ENCODE measurements at regions of chr12 and their contacts with region 1.

Region 1: DNA sequence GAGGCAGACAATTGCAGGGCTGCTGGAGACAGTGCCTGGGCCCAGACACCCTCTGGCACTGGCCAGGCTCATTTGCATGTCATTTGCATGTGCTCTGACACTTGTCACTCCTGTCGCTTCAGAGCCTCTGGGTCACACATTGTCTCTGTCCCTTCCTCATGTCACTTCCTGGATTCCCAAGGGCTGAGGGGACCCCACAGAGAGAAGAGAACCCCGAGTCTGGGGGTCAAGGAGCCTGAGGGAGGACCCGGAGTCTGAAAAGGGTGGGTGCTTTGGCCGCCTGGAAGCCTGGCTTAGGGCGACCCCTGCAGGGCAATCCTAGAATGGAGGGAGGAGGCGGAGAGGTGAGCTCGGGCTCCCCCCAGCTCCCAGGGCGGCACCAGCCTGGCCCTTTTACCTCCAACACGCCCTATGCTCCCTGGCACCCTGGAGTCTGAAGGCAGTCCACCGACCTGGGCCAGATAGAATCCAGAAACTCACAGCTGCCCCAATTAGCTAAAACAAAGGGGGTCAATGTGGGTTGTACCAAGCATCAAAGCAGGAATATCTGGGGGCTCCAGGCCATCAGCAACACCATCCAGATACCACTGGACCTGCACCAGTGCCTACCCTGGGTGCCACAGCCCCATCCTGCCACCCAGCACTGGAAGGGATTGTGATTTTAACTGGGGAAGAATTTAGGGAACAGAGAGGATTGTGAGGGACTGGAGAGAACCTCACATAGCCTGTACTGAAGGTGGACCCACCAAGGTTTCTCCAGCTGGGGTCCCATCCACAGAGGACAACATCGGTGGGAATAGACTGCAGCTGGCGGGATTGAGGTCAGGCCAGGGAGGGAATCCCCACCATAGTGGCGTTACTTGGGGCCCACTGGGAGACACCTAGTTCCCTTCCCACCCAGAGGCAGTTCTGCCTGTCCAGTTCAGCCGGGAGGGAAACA is 21.8 kb upstream of the KRT78 start:
- DNase-seq: peak; percentile 88
- H3K4me3 Mint-ChIP-seq: no peak overlapping the region
- H3K27ac Mint-ChIP-seq: no peak overlapping the region
- H3K4me1 Mint-ChIP-seq: peaks cover 25% of the 10 kb centered on the region
- H3K27me3 Mint-ChIP-seq: no peaks in the 10 kb centered on the region

Region 2: GRCh38 chr12:52203075-52203921 is 667.3 kb before region 1 on chr12:
- CTCF ChIA-PET with region 1: no interaction called
- intact Hi-C with region 1: no loop called
- DNase-seq: peak; percentile 37
- H3K4me3 Mint-ChIP-seq: no peak overlapping the region
- H3K27ac Mint-ChIP-seq: no peak overlapping the region
- H3K4me1 Mint-ChIP-seq: peaks cover 6% of the 10 kb centered on the region
- H3K27me3 Mint-ChIP-seq: peaks cover 7% of the 10 kb centered on the region

Region 3: DNA sequence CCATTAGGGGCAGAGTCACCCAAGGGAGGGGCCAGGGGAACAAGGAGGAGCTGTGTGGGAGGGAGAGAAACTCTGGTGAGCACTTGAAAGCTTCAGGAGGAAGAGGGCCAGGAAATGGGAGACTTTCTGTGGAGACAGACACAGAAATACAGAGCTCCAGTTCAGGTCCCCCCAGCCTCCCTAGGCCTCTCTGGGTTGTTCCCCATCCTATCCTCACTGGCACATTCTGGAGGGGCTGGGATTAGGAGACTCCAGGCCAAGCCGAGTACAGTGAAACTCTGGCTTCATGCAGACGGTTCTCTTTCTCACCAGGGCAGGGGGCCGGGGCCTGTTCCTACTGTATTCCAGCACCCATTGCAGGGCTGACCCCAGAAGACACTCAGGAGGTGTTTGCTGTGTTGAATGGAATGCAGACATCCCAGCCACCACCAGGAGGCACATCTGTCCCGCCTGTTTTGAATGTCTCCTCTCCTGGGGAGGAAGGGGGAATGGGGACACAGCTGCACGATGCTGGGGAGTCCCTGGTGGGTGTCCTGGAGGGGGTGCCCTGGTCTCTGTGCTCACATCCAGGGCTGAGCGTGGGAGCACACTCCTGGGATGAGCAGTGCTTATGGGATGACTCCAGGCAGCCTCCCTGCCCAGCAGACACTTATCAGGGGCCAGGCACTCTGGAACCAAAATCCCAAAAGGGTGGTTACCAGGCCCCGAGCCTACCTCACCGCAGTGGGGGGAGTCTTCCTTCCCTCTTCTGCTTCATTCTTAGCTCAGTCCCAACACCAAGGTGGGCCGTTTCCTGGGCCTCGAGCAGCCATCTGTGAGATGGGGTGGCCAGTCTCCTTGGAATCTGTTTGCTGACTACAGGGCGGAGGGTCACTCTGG is 479.6 kb before region 1 on chr12:
- CTCF ChIA-PET with region 1: interaction called, 3 read pairs
- intact Hi-C with region 1: loop called (anchors 5 kb)
- DNase-seq: peak; percentile 21
- H3K4me3 Mint-ChIP-seq: no peak overlapping the region
- H3K27ac Mint-ChIP-seq: no peak overlapping the region
- H3K4me1 Mint-ChIP-seq: no peaks in the 10 kb centered on the region
- H3K27me3 Mint-ChIP-seq: no peaks in the 10 kb centered on the region

Region 4: DNA sequence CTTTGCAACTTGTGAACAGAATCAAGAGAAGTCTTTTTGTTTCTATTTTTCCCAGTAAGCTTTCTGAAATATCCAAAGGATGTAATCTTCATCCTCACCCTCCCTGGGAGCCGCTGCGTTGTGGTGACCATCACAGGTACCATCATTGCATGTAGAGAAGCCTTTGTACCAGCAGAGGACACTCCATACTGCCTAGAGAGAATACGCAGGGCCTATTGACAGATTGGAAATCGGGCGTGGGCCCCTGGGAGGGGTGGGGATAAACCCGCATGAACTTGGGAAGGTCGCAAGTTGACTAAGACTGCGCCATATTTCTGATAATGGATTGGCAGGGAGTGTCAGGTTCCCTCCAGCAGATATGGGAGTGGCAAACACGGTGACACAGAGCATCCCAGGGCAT is 203.1 kb before region 1 on chr12:
- CTCF ChIA-PET with region 1: interaction called, 4 read pairs
- intact Hi-C with region 1: loop called (anchors 5 kb)
- DNase-seq: no peak
- H3K4me3 Mint-ChIP-seq: no peak overlapping the region
- H3K27ac Mint-ChIP-seq: no peak overlapping the region
- H3K4me1 Mint-ChIP-seq: no peaks in the 10 kb centered on the region
- H3K27me3 Mint-ChIP-seq: no peaks in the 10 kb centered on the region

Region 5: GRCh38 chr12:53321074-53321814 is 450.6 kb after region 1 on chr12 and contains the start of gene AAAS:
- CTCF ChIA-PET with region 1: no interaction called
- intact Hi-C with region 1: no loop called
- DNase-seq: peak; percentile 98
- H3K4me3 Mint-ChIP-seq: peak within 1 kb of the TSS; percentile 91
- H3K27ac Mint-ChIP-seq: peak within 1 kb of the TSS; percentile 97
- H3K4me1 Mint-ChIP-seq: peaks cover 38% of the 10 kb centered on the region
- H3K27me3 Mint-ChIP-seq: no peaks in the 10 kb centered on the region
- total RNA-seq, gene AAAS: 81.0 to 83.4 TPM

Region 6: DNA sequence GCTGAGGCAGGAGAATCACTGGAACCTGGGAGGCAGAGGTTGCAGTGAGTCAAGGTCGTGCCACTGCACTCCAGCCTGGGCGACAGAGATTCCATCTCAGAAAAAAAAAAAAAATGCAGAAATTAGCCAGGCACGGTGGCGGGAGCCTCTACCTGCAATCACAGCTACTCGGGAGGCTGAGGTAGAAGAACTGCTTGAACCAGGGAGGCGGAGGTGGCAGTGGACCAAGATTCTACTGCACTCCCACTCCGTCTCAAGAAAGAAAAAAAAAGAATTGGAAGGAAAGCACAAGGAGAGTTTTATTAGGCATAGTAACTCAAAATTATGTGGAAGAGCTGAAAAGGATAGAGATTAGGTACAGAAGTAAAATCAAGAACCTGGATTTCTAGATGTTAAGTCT is 532.2 kb after region 1 on chr12:
- CTCF ChIA-PET with region 1: no interaction called
- intact Hi-C with region 1: no loop called
- DNase-seq: no peak
- H3K4me3 Mint-ChIP-seq: no peak overlapping the region
- H3K27ac Mint-ChIP-seq: no peak overlapping the region
- H3K4me1 Mint-ChIP-seq: peaks cover 9% of the 10 kb centered on the region
- H3K27me3 Mint-ChIP-seq: no peaks in the 10 kb centered on the region

Region 7: GRCh38 chr12:53414756-53415417 is 544.3 kb after region 1 on chr12:
- CTCF ChIA-PET with region 1: no interaction called
- intact Hi-C with region 1: no loop called
- DNase-seq: no peak
- H3K4me3 Mint-ChIP-seq: no peak overlapping the region
- H3K27ac Mint-ChIP-seq: no peak overlapping the region
- H3K4me1 Mint-ChIP-seq: peaks cover 74% of the 10 kb centered on the region
- H3K27me3 Mint-ChIP-seq: no peaks in the 10 kb centered on the region

Measured in activated naive CD4-positive, alpha-beta T cell treated with anti-CD3 and anti-CD28 coated beads for 36 hours (primary cell).